ENCODE measurements at regions of chr7 and their contacts with region 1.

Region 1: GRCh38 chr7:129389829-129390228 is 44.4 kb upstream of the STRIP2 start:
- DNase-seq: no peak
- H3K4me3 ChIP-seq: no peak overlapping the region
- H3K27ac ChIP-seq: no peak overlapping the region
- H3K27me3 ChIP-seq: no peaks in the 10 kb centered on the region
- CTCF ChIP-seq: 0 out of 2 replicates have a peak, but pooled peaks have one; percentile 4

Region 2: GRCh38 chr7:129376076-129376777 is 13.6 kb before region 1 on chr7:
- CTCF ChIA-PET with region 1: interaction called, 30 read pairs
- POLR2A ChIA-PET with region 1: no interaction called
- DNase-seq: no peak
- H3K4me3 ChIP-seq: no peak overlapping the region
- H3K27ac ChIP-seq: no peak overlapping the region
- H3K27me3 ChIP-seq: no peaks in the 10 kb centered on the region
- CTCF ChIP-seq: peak; percentile 72